ENCODE measurements at regions of chr1 and their contacts with region 1.

Region 1: DNA sequence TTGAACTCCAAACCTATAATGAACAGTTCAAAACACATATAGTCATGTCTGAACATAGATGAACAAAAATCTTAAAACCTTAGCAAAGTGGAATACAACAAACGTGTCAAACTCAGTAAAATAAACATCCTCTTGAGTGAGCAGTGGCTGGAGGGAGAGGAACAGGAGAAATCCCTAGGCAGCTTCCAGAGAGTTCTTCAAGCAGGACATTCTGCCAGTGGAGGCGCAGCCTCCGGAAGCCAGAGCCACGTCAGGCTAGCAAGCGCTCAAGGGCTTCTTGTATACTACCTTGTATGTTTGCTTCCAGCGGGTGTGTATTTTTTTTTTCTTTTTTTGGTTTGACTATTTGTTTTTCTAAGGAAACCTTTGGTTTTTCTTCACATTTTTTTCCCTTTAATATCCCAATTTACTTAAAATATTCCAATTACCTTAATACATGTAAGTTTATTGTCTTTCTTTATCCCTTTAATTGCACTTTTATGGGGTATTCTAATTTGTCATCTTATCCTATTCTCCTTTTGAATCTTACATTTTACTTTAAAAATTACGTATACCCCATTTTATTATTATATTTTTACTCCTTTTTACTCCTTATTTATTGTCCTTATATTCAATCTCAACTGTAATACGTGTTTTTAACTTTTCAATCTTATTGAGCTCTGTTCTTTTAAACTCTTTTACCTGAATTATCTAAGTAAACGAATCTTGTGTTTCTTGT is 42.0 kb downstream of the COLGALT2 start:
- DNase-seq: peak in 1 of 2 experiments; percentile 23
- H3K4me3 ChIP-seq: no peak overlapping the region
- H3K4me3 Mint-ChIP-seq: peak overlapping the region; percentile 69
- H3K27ac Mint-ChIP-seq: peak overlapping the region; percentile 92
- H3K4me1 ChIP-seq: peaks cover 61% of the 10 kb centered on the region
- H3K4me1 Mint-ChIP-seq: peaks cover 46% of the 10 kb centered on the region
- H3K27me3 ChIP-seq: no peaks in the 10 kb centered on the region
- H3K27me3 Mint-ChIP-seq: no peaks in the 10 kb centered on the region
- CTCF ChIP-seq: no peak

Region 2: GRCh38 chr1:183635606-183636333 is 359.7 kb before region 1 on chr1 and contains the start of gene ARPC5:
- CTCF ChIA-PET with region 1: no interaction called
- POLR2A ChIA-PET with region 1: no interaction called
- intact Hi-C with region 1: loop called (anchors 2 kb)
- DNase-seq: peak; percentile 96 to 97
- H3K4me3 ChIP-seq: peak within 1 kb of the TSS; percentile 78
- H3K4me3 Mint-ChIP-seq: peak within 1 kb of the TSS; percentile 91
- H3K27ac Mint-ChIP-seq: peak within 1 kb of the TSS; percentile 90
- H3K4me1 ChIP-seq: peaks cover 41% of the 10 kb centered on the region
- H3K4me1 Mint-ChIP-seq: peaks cover 16% of the 10 kb centered on the region
- H3K27me3 ChIP-seq: no peaks in the 10 kb centered on the region
- H3K27me3 Mint-ChIP-seq: no peaks in the 10 kb centered on the region
- CTCF ChIP-seq: no peak
- total RNA-seq, gene ARPC5: 123 and 135 TPM in 2 replicates

Region 3: DNA sequence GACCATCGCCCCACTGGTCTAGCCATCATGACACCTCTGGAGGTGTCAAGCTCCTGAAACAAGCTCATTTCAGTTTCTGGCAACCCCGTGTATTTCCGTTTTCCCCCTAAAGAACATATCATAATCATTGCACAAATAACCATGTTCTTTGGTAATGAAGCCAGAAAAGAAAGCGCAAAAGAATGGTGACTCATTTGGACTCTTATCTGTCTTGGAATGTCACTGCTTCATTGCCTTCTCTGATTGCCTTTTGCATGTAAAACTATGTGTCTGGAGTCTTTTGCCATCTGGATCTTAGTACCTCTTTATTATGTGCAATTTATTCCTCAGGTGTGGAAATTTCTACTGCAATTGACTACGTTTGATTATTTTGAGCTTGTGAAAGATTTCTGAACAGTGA is 68.5 kb before region 1 on chr1:
- CTCF ChIA-PET with region 1: no interaction called
- POLR2A ChIA-PET with region 1: interaction called, 6 read pairs
- intact Hi-C with region 1: loop called (anchors 1 kb)
- DNase-seq: peak in 1 of 2 experiments; percentile 40
- H3K4me3 ChIP-seq: no peak overlapping the region
- H3K4me3 Mint-ChIP-seq: peak overlapping the region; percentile 52
- H3K27ac Mint-ChIP-seq: peak overlapping the region; percentile 86
- H3K4me1 ChIP-seq: peaks cover 27% of the 10 kb centered on the region
- H3K4me1 Mint-ChIP-seq: peaks cover 23% of the 10 kb centered on the region
- H3K27me3 ChIP-seq: no peaks in the 10 kb centered on the region
- H3K27me3 Mint-ChIP-seq: no peaks in the 10 kb centered on the region
- CTCF ChIP-seq: no peak

Region 4: DNA sequence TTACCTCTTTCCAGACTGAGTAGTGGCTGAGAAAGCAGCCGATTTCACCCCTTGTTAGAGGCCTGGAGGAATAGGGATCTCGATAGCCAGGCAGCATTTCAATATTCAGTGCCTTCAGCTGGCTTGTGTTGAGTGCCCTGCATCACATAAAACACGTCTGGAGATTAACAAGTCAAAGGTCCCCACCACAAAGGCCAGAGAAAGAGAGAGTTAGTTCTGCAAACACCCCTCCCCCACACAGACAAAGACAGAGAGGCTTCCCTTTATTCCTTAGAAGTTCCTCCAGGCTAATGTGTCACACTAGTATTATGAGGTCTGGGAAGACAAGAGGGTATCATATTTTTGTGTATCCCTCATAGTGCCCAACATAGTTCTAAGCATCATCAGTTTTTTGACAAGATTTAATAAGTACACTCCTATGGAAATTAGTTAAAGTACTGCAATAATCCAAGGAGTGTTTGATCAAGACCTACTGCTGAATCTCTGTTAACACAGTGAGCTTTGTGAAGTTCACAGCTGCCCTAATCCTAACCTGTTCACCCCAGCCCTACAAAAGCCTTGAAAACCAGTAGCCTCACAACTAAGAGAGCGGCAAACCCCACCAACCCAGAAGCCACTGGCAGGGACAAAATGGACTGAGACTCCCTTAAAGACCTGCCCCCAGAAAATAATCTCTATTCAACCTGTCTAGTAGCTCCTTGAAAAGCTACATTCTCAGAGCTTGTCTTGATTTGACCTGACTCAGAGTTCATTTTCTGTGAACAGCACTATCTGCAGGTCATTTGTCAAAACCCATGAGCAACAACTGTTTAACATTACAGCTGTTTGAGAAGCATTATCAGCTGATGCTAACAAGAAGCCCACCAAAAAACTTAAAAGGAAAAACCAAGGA is 49.8 kb before region 1 on chr1:
- CTCF ChIA-PET with region 1: interaction called, 6 read pairs
- POLR2A ChIA-PET with region 1: no interaction called
- intact Hi-C with region 1: loop called (anchors 1 kb)
- DNase-seq: peak; percentile 56 to 65
- H3K4me3 ChIP-seq: no peak overlapping the region
- H3K4me3 Mint-ChIP-seq: peak overlapping the region; percentile 12
- H3K27ac Mint-ChIP-seq: peak overlapping the region; percentile 68
- H3K4me1 ChIP-seq: peaks cover 20% of the 10 kb centered on the region
- H3K4me1 Mint-ChIP-seq: peaks cover 28% of the 10 kb centered on the region
- H3K27me3 ChIP-seq: no peaks in the 10 kb centered on the region
- H3K27me3 Mint-ChIP-seq: no peaks in the 10 kb centered on the region
- CTCF ChIP-seq: no peak

Region 5: DNA sequence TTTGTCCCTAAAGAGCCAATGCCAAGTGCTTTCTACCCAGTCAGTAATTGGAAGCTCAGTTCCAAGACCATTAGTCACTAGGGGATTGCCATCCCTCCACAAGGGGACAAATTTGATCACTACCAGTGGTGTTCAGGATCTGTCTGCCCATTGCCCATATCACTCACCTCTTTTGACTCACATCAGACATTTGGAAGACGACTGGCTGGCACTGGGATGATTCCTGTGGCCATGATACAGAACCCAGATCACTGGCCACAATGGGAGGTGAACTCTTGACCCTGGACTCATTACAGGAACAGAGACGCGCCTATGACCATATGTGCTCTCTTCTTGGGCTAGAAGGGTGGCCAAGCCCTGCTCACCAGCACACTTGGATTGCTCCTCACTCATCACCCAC is 29.0 kb before region 1 on chr1:
- CTCF ChIA-PET with region 1: no interaction called
- POLR2A ChIA-PET with region 1: no interaction called
- intact Hi-C with region 1: loop called (anchors 1 kb)
- DNase-seq: no peak
- H3K4me3 ChIP-seq: no peak overlapping the region
- H3K4me3 Mint-ChIP-seq: no peak overlapping the region
- H3K27ac Mint-ChIP-seq: no peak overlapping the region
- H3K4me1 ChIP-seq: 0 out of 2 replicates have a peak, but pooled peaks cover 8% of the 10 kb centered on the region
- H3K4me1 Mint-ChIP-seq: no peaks in the 10 kb centered on the region
- H3K27me3 ChIP-seq: no peaks in the 10 kb centered on the region
- H3K27me3 Mint-ChIP-seq: no peaks in the 10 kb centered on the region
- CTCF ChIP-seq: no peak

Region 6: DNA sequence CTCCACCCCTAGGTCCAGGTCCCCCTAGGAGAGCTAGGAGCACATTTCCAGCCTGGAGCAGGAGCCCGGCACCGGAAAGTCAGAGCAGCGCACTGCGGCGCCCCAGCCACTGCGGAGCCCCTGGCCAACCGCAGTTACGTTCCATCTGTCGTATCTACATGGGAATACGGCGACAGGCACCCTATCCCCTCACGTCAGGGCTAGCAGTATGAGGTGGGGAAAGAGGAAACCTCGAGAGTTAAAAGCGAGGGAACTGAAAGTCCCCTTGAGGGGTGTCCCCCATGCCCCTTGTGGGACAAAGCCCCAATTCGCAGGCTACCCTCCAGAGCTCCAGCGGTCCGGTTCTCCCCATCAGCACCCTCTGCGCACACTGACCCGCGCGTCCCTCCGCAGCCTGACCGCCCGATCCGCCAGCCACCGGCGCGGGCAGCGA is 41.1 kb after region 1 on chr1:
- CTCF ChIA-PET with region 1: no interaction called
- POLR2A ChIA-PET with region 1: no interaction called
- intact Hi-C with region 1: loop called (anchors 1 kb)
- DNase-seq: peak; percentile 51 to 62
- H3K4me3 ChIP-seq: peak overlapping the region; percentile 82
- H3K4me3 Mint-ChIP-seq: peak overlapping the region; percentile 86
- H3K27ac Mint-ChIP-seq: no peak overlapping the region
- H3K4me1 ChIP-seq: peaks cover 15% of the 10 kb centered on the region; the same call in 1 of the 2 replicates
- H3K4me1 Mint-ChIP-seq: peaks cover 26% of the 10 kb centered on the region
- H3K27me3 ChIP-seq: no peaks in the 10 kb centered on the region
- H3K27me3 Mint-ChIP-seq: peaks cover 5% of the 10 kb centered on the region
- CTCF ChIP-seq: no peak

Measured in Caco-2 (cell line).